ENCODE measurements at regions of chr1 and their contacts with region 1.

Region 1: GRCh38 chr1:68232354-68233148 is at the start of gene WLS:
- DNase-seq: peak; percentile 10 to 89
- H3K4me3 ChIP-seq: peak within 1 kb of the TSS; percentile 73 to 80
- H3K27ac ChIP-seq: peak within 1 kb of the TSS; percentile 78 to 89
- H3K4me1 ChIP-seq: peaks cover 0 to 13% of the 10 kb centered on the region in 2 donors
- H3K27me3 ChIP-seq: no peaks in the 10 kb centered on the region
- CTCF ChIP-seq: no peak
- total RNA-seq, gene WLS: 29.9 TPM

Region 2: DNA sequence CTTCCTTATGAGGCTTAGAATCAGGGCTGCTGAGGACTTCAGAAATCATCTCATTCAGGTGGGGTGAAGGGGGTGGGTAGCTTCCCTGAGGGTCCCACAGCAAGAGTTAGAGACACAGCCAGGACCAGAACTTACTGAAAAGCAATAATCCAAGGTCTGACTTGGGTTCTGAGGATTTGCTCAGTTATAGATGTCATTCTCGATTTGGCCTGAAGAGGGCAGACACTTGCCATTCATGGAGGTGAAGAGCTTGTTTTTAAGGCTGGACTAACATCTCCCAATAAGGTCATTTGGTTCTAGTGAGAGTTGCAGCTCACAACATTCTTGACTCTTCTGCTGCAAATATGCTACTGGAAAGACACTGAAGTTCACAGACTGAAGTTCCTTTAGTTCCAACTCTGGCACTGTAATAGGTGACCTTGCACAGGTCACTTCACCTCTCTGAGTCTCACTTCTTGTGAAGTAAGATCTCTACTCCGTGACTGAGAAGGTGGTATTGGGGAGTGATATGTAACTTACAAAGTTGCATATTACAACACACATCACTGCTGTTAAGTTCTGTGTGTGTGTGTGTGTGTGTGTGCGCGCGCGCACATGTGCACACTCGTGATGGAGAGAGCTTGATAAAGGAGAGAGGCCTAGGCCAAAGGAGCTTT is 112.3 kb before region 1 on chr1:
- intact Hi-C with region 1: loop called (anchors 2 kb)
- DNase-seq: peak in 1 of 2 donors; percentile 80
- H3K4me3 ChIP-seq: no peak overlapping the region
- H3K27ac ChIP-seq: peak overlapping the region in 1 of 2 donors; percentile 50
- H3K4me1 ChIP-seq: peaks cover 0 to 7% of the 10 kb centered on the region in 2 donors
- H3K27me3 ChIP-seq: no peaks in the 10 kb centered on the region
- CTCF ChIP-seq: peak; percentile 75 to 89 (median 82)

Region 3: DNA sequence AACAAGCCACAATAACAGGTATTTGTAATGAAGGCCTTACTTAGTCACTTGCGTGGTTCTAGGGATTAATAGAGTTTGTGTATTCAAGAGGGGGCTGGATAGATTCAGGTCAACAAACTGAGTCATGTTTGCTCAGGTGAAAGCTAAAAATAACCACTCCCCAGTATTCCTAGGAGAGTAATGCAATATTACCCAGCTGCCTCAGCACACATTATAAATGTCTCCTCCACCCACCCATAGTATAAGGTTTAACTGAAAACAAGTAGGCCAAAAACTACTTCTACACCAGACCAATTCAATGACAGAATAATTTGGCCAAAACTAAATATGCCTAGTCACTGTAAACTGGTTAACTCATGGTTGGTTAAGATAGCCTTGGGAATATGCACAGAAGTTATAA is 34.7 kb before region 1 on chr1:
- intact Hi-C with region 1: loop called (anchors 2 kb)
- DNase-seq: no peak
- H3K4me3 ChIP-seq: no peak overlapping the region
- H3K27ac ChIP-seq: peak overlapping the region in 1 of 2 donors; percentile 58
- H3K4me1 ChIP-seq: peaks cover 0 to 23% of the 10 kb centered on the region in 2 donors
- H3K27me3 ChIP-seq: no peaks in the 10 kb centered on the region
- CTCF ChIP-seq: no peak

Region 4: DNA sequence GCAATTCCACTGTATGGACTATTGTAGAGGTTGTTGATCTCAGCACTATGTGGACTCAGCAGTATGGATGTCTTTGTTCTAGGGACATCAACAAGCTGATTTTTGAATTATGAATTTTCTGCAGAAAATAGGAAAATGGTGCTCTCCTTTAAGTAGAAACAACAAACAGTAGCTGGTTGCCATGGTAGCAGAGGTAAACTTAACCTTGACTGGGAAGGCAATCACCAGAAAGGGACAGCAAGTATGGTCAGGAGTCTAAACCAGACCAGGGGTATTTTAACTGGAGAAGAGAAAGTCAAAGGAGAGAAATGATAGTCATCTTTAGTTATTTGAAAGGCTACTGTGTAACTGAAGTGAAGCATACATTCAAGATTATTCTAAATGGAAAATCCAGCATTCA is 22.5 kb before region 1 on chr1:
- intact Hi-C with region 1: no loop called
- DNase-seq: no peak
- H3K4me3 ChIP-seq: no peak overlapping the region
- H3K27ac ChIP-seq: no peak overlapping the region
- H3K4me1 ChIP-seq: peaks cover 2 to 20% of the 10 kb centered on the region in 2 donors
- H3K27me3 ChIP-seq: no peaks in the 10 kb centered on the region
- CTCF ChIP-seq: no peak

Region 5: DNA sequence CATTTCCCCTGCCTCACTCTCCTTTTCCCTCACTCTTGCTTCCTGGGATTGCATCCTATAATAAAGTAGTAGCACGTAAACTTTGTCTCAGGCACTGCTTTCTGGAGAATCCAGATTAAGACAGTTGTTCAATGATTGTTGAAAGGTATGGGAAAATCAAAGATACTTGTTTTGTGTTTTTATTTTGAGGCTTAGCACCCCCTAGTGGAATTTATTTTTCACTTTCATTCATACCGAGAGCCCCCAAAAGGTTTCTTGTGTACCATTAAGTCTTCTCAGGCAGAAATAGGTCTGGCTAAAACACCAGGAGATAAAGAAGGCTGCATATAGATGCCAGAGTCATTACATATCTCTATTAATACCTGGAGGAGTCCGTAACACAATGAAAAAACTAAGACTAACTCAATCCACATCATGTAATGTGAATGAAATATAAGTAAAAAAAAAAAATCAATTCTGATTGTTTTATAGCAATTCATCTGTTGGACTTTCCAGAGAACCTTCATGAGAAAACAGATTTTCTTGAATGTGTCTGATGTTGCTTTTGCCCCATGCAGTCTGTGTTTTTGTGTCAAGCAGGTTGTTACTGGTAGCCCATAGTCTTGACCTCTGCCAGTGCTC is 113.7 kb after region 1 on chr1:
- intact Hi-C with region 1: loop called (anchors 2 kb)
- DNase-seq: no peak
- H3K4me3 ChIP-seq: no peak overlapping the region
- H3K27ac ChIP-seq: no peak overlapping the region
- H3K4me1 ChIP-seq: no peaks in the 10 kb centered on the region
- H3K27me3 ChIP-seq: no peaks in the 10 kb centered on the region
- CTCF ChIP-seq: peak; percentile 19 to 49 (median 42)